ENCODE measurements at regions of chr18 and their contacts with region 1.

Region 1: DNA sequence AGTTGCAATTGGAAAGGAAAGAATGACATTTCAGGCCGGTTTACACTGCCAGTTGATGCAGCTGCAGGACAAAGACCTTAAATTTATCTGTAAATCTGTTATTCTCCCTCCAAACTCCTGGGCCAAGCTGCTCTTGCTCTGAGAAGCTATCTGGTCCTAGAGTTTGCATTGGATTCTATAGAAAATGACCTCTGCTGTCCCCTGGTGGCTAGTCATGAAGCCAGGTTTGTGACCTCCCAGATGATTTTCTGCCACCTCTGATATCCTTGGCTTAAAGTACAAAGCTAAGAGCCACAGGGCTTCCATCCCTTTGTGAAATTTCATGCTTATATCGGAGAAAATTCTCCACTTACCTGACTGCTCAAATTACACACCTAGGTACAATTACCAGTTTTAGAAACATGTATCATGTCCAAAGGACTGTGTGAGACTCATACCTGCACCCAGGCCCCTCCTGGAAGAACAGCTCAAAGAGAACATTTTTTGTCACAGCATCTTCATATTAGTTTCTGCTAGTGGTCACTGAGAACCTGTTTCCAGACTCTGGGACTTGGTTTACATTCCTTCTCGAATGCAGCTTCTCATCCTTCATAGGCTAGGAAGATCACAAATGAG is 28.9 kb upstream of the IER3IP1 start:
- DNase-seq: peak; percentile 20
- H3K4me3 ChIP-seq: no peak overlapping the region
- H3K27ac ChIP-seq: no peak overlapping the region
- H3K4me1 ChIP-seq: no peaks in the 10 kb centered on the region
- H3K27me3 ChIP-seq: peaks cover 4% of the 10 kb centered on the region
- CTCF ChIP-seq: peak; percentile 90 to 96

Region 2: DNA sequence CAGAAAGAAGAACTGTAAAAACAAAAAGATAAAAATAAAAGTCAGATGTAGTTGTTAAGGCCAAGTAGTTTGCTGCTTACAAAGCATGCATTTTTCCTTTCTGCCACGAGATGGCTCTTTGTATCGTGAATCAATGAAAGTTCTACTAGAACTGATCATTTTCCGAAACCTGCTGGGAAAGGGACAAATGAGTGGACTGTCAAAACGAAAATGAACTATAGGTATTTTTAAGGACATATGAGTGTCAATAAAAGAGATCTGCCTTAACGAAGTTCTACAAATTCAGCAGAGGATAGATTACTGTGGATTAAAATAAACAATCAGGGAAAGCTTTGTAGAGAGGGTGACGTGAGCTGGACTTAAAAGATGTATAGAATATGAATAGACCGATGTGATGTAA is 154.5 kb before region 1 on chr18:
- CTCF ChIA-PET with region 1: no interaction called
- dilution Hi-C with region 1: no loop called
- in situ Hi-C with region 1: no loop called
- intact Hi-C with region 1: loop called (anchors 1 kb)
- DNase-seq: peak; percentile 27
- H3K4me3 ChIP-seq: no peak overlapping the region
- H3K27ac ChIP-seq: no peak overlapping the region
- H3K4me1 ChIP-seq: no peaks in the 10 kb centered on the region
- H3K27me3 ChIP-seq: peaks cover 3% of the 10 kb centered on the region
- CTCF ChIP-seq: peak; percentile 68 to 74

Region 3: DNA sequence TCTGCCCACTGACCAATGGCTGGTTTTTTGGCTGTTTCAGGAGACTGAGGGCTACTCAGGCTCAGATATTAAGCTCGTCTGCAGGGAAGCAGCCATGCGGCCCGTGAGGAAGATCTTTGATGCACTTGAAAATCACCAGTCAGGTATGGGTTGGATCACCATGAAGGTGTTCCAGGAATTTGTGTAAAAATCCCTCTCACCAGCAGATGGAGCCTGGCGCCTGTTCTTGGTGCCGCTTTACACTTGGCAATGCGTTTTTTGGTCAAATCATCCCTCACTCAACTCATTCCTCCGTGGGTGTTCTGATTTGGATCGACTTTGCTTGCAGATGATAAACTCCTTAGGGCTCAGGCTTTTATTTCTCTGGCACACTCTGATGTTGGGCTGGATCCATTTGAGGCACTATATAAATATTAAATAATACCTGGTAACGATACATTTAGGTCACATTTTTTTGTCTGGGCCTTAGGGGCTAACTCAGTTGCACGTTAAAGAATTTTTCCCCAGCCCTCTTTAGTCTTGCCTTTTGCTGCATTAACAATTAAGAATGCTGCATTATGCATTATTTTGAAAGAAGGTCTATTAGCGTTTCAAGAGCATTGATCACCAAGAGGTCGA is 104.7 kb before region 1 on chr18:
- CTCF ChIA-PET with region 1: interaction called, 5 read pairs
- dilution Hi-C with region 1: loop called (anchors 5 kb)
- in situ Hi-C with region 1: loop called (anchors 5 to 10 kb)
- intact Hi-C with region 1: loop called (anchors 1 kb)
- DNase-seq: peak; percentile 52
- H3K4me3 ChIP-seq: no peak overlapping the region
- H3K27ac ChIP-seq: no peak overlapping the region
- H3K4me1 ChIP-seq: no peaks in the 10 kb centered on the region
- H3K27me3 ChIP-seq: no peaks in the 10 kb centered on the region
- CTCF ChIP-seq: peak; percentile 70 to 88

Region 4: DNA sequence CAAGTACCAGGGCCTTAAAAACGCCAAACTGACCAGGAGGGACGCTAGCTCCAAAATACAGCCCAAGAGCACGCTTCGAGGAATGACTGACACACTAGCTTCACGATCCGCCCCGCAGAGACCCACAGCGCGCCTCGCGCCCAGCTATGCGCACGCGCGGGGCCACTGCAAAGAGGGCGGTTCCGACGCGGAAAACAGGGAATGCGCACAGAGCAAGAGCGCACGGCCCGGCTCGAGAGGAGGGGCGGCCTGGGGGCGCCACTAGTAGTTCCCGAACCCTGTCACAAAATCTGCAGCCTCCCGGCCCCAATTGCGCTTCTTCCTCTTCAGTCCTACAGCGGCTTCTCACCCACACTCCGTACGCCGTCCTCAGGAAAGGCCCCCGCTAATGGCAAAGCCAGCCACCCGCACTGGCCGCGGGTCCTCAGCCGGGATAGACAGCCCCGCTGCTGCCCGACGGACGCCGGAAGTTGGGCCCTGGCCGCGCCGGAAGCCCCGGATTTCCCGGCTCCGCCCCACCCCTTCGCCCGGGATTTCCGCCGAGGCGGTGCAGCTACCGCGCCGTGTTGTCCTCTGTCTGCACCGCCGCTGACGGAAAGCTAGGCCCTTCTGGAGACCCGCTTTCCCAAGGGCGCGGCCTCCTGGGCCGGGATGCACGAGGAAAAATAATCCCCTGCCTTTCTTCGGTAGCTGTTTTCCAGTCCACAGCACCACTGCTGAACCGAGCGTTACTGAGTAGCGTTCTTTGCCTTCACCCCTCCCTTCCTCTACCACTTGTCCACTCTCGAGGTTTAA is 54.8 kb before region 1 on chr18 and contains the start of gene HDHD2:
- CTCF ChIA-PET with region 1: interaction called, 12 read pairs
- dilution Hi-C with region 1: no loop called
- in situ Hi-C with region 1: no loop called
- intact Hi-C with region 1: no loop called
- DNase-seq: peak; percentile 80
- H3K4me3 ChIP-seq: peak within 1 kb of the TSS; percentile 84 to 94 (median 92)
- H3K27ac ChIP-seq: peak within 1 kb of the TSS; percentile 69
- H3K4me1 ChIP-seq: peaks cover 5% of the 10 kb centered on the region
- H3K27me3 ChIP-seq: no peaks in the 10 kb centered on the region
- CTCF ChIP-seq: no peak
- total RNA-seq, gene HDHD2: 18.3 to 28.6 TPM

Region 5: GRCh38 chr18:47226660-47227059 is 21.6 kb after region 1 on chr18:
- CTCF ChIA-PET with region 1: no interaction called
- dilution Hi-C with region 1: no loop called
- in situ Hi-C with region 1: no loop called
- intact Hi-C with region 1: no loop called
- DNase-seq: no peak
- H3K4me3 ChIP-seq: no peak overlapping the region
- H3K27ac ChIP-seq: no peak overlapping the region
- H3K4me1 ChIP-seq: no peaks in the 10 kb centered on the region
- H3K27me3 ChIP-seq: no peaks in the 10 kb centered on the region
- CTCF ChIP-seq: no peak